ENCODE measurements at regions of chr12 and their contacts with region 1.

Region 1: GRCh38 chr12:124940549-124941527 is 26.4 kb upstream of the UBC start:
- DNase-seq: peak; percentile 85 to 88
- H3K4me3 ChIP-seq: peak overlapping the region; percentile 64 to 83 (median 72); a peak in 6 of 8 replicates
- H3K27ac ChIP-seq: no peak overlapping the region
- H3K4me1 ChIP-seq: peaks cover 0 to 4% (median 2%) of the 10 kb centered on the region in 4 experiments; a peak in 2 of 7 replicates
- H3K27me3 ChIP-seq: no peaks in the 10 kb centered on the region
- CTCF ChIP-seq: peak; percentile 85 to 97 (median 87)
- EP300 ChIP-seq: no peak
- POLR2A ChIP-seq: 0 out of 3 replicates have a peak, but pooled peaks of 1 of the 2 experiments have one; percentile 10
- RAD21 ChIP-seq: peak; percentile 45 to 52

Region 2: DNA sequence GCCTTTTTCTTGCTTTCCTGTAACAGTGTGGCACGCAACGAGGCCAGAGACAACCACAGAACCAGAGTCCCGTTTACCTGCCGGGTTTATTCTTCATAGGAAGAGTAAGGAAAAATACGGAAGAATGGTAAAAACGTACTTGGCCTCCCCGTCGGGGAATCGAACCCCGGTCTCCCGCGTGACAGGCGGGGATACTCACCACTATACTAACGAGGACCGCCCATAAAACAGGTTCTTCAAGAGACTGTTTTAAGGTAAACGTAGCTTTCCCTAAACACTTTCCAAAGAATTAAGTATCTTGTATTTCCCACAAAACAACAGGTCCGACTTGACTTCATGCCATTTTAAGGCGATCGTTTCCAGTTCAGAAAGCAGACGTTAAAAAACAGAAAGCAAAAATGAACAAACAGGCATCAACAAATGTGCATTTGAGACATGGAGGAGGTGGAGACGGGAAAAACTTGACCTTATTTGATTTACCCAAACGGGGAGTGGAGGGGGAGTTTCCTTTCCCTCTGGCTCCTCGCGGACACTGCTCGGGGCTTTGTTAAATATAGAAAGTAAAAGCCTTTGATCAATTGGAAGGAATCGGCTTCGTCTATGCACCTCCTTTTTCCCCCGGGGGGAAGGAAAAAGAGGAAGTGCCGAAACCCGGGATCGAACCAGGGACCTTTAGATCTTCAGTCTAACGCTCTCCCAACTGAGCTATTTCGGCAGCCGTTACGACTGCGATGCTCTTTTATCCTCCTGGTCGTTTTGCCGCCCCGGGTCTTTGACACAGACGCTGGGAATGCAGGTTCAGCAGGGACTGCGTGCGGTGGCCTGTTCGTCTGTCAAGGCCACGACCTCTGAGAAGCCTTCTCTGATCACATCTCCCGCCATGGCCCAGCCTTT is 13.4 kb before region 1 on chr12:
- CTCF ChIA-PET with region 1: interaction called, 86 read pairs
- POLR2A ChIA-PET with region 1: interaction called, 250 read pairs
- DNase-seq: peak in 1 of 2 experiments; percentile 99
- H3K4me3 ChIP-seq: peak overlapping the region; percentile 82 to 99 (median 98)
- H3K27ac ChIP-seq: peak overlapping the region; percentile 72; the same call in 1 of the 2 replicates
- H3K4me1 ChIP-seq: peaks cover 0 to 9% (median 1%) of the 10 kb centered on the region in 4 experiments; a peak in 4 of 7 replicates
- H3K27me3 ChIP-seq: no peaks in the 10 kb centered on the region
- CTCF ChIP-seq: peak in 1 of 3 experiments; percentile 6; a peak in 1 of 4 replicates
- EP300 ChIP-seq: no peak
- POLR2A ChIP-seq: no peak
- RAD21 ChIP-seq: 0 out of 4 replicates have a peak, but pooled peaks of 1 of the 2 experiments have one; percentile 3

Region 3: DNA sequence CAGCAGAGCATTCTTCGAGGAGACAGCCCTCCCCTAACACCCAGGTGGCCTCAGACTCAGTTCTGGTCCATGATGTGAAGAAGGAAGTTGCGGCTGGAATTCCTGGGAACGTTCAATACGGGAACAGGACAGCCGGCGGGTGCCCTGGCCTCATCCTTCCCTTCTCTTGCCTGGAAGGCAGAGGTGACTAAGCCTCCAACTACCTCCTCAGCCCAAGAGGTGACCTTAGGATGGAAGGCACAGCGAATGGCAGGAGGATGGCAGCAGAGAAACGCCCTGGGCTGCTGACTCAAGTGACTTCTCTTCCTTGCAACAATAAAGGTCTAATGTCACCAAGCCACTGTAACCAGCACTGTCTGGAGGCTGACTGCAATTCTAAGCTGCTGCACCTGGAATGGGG is 12.0 kb after region 1 on chr12:
- CTCF ChIA-PET with region 1: interaction called, 5 read pairs
- POLR2A ChIA-PET with region 1: interaction called, 13 read pairs
- DNase-seq: no peak
- H3K4me3 ChIP-seq: no peak overlapping the region
- H3K27ac ChIP-seq: no peak overlapping the region
- H3K4me1 ChIP-seq: no peaks in the 10 kb centered on the region
- H3K27me3 ChIP-seq: no peaks in the 10 kb centered on the region
- CTCF ChIP-seq: no peak
- EP300 ChIP-seq: no peak
- POLR2A ChIP-seq: no peak
- RAD21 ChIP-seq: no peak